ENCODE measurements at regions of chr14 and their contacts with region 1.

Region 1: DNA sequence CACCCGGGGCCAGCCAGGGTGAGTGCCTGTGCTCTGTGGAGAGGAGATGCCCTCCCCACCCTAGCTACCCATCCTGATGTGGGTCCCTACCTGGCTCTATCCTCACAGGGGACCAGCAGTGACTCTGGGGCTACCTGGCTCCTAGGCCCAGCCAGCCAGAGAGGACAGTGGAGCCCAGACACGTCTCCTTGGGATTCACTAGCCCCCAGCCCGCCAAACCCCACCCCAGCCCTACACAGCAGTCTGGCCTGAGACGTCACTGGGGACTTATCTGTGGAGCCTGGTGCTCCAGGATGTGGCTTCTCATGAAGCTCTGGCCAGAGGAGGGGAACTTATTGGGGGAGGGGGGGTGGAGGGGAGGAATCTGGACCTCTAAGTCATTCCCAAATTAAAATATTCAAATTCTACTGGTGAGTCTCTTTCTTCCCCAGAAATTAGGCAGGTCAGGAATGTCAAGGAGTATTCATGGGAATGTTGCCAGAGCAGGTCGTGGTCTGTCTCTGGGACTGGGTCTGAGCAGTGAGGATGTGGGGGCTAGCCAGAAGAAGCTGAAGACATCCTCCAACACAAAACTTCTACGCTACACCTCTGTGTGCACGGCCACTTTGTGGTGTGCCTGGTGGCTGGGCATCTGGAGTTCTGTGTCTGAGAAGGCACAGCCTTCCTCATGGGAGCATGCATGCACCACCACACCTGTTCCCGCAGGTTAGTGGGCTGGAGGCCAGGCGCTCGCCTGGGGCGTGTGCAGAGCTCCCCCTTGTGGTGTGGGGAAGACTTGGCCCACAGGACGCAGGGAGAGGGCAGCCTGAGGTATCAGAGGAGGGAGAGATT is 2.7 kb downstream of the CMTM5 start:
- DNase-seq: peak; percentile 53 to 84 (median 67)
- ATAC-seq: peak; percentile 96
- H3K4me3 ChIP-seq: no peak overlapping the region
- H3K4me3 Mint-ChIP-seq: no peak overlapping the region
- H3K27ac ChIP-seq: no peak overlapping the region
- H3K27ac Mint-ChIP-seq: no peak overlapping the region
- H3K4me1 ChIP-seq: no peaks in the 10 kb centered on the region
- H3K4me1 Mint-ChIP-seq: no peaks in the 10 kb centered on the region
- H3K27me3 ChIP-seq: no peaks in the 10 kb centered on the region
- H3K27me3 Mint-ChIP-seq: peaks cover 24% of the 10 kb centered on the region
- CTCF ChIP-seq: peak; percentile 89

Region 2: GRCh38 chr14:23061995-23062394 is 317.6 kb before region 1 on chr14:
- CTCF ChIA-PET with region 1: no interaction called
- POLR2A ChIA-PET with region 1: no interaction called
- intact Hi-C with region 1: no loop called
- DNase-seq: no peak
- ATAC-seq: no peak
- H3K4me3 ChIP-seq: no peak overlapping the region
- H3K4me3 Mint-ChIP-seq: no peak overlapping the region
- H3K27ac ChIP-seq: no peak overlapping the region
- H3K27ac Mint-ChIP-seq: no peak overlapping the region
- H3K4me1 ChIP-seq: peaks cover 10% of the 10 kb centered on the region
- H3K4me1 Mint-ChIP-seq: peaks cover 11% of the 10 kb centered on the region
- H3K27me3 ChIP-seq: no peaks in the 10 kb centered on the region
- H3K27me3 Mint-ChIP-seq: no peaks in the 10 kb centered on the region
- CTCF ChIP-seq: no peak

Region 3: DNA sequence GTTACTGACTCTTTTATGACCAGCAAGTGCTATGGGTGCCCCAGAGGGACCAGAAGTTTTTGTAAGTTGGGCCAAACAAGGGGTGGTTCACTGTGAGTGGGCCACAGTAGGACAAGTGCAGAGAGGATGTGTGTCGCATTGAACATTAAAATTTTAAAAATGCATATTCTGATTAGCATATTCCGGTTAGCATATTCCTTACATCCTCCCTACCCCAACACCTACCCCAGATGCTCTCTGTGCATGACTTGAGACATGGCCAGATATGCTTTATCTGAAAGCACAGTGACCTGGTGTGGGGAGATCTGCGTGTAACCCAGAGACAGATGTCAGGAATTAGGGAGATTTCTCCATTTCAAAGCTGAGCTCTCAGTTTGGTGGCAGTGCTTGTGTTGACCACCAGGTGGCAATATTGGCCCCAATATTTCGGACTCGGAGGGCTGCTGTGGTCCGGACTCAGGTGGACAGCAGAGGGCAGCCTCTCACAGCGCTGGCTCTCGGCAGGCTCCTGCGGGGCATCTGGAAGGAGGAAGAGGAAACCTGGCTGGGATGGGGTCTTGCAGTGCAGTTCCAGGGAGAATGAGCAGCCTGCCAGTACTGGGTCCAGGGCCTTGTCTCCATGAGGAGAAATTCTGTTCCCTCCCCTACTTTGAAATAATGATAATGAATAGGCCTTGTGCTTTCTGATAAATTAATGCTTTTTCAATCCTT is 258.9 kb before region 1 on chr14:
- CTCF ChIA-PET with region 1: interaction called, 8 read pairs
- POLR2A ChIA-PET with region 1: no interaction called
- intact Hi-C with region 1: loop called in 1 of 2 experiments (anchors 2 kb)
- DNase-seq: peak; percentile 63 to 91 (median 72)
- ATAC-seq: peak; percentile 61
- H3K4me3 ChIP-seq: no peak overlapping the region
- H3K4me3 Mint-ChIP-seq: peak overlapping the region; percentile 80
- H3K27ac ChIP-seq: peak overlapping the region; percentile 51 to 55
- H3K27ac Mint-ChIP-seq: peak overlapping the region; percentile 94
- H3K4me1 ChIP-seq: peaks cover 54% of the 10 kb centered on the region
- H3K4me1 Mint-ChIP-seq: peaks cover 61% of the 10 kb centered on the region
- H3K27me3 ChIP-seq: no peaks in the 10 kb centered on the region
- H3K27me3 Mint-ChIP-seq: no peaks in the 10 kb centered on the region
- CTCF ChIP-seq: peak; percentile 99

Region 4: GRCh38 chr14:23269193-23269592 is 110.4 kb before region 1 on chr14:
- CTCF ChIA-PET with region 1: interaction called, 9 read pairs
- POLR2A ChIA-PET with region 1: interaction called, 3 read pairs
- intact Hi-C with region 1: loop called (anchors 1 kb)
- DNase-seq: no peak
- ATAC-seq: no peak
- H3K4me3 ChIP-seq: no peak overlapping the region
- H3K4me3 Mint-ChIP-seq: no peak overlapping the region
- H3K27ac ChIP-seq: no peak overlapping the region
- H3K27ac Mint-ChIP-seq: no peak overlapping the region
- H3K4me1 ChIP-seq: no peaks in the 10 kb centered on the region
- H3K4me1 Mint-ChIP-seq: no peaks in the 10 kb centered on the region
- H3K27me3 ChIP-seq: peaks cover 0 to 4% of the 10 kb centered on the region in 2 experiments
- H3K27me3 Mint-ChIP-seq: peaks cover 17% of the 10 kb centered on the region
- CTCF ChIP-seq: no peak

Region 5: GRCh38 chr14:23327947-23328744 is 51.4 kb before region 1 on chr14:
- CTCF ChIA-PET with region 1: interaction called, 4 read pairs
- POLR2A ChIA-PET with region 1: no interaction called
- intact Hi-C with region 1: loop called (anchors 1 kb)
- DNase-seq: peak; percentile 32 to 84 (median 54)
- ATAC-seq: peak; percentile 78
- H3K4me3 ChIP-seq: no peak overlapping the region
- H3K4me3 Mint-ChIP-seq: peak overlapping the region; percentile 36
- H3K27ac ChIP-seq: no peak overlapping the region
- H3K27ac Mint-ChIP-seq: no peak overlapping the region
- H3K4me1 ChIP-seq: peaks cover 9% of the 10 kb centered on the region
- H3K4me1 Mint-ChIP-seq: peaks cover 8% of the 10 kb centered on the region
- H3K27me3 ChIP-seq: no peaks in the 10 kb centered on the region
- H3K27me3 Mint-ChIP-seq: no peaks in the 10 kb centered on the region
- CTCF ChIP-seq: peak; percentile 96

Region 6: DNA sequence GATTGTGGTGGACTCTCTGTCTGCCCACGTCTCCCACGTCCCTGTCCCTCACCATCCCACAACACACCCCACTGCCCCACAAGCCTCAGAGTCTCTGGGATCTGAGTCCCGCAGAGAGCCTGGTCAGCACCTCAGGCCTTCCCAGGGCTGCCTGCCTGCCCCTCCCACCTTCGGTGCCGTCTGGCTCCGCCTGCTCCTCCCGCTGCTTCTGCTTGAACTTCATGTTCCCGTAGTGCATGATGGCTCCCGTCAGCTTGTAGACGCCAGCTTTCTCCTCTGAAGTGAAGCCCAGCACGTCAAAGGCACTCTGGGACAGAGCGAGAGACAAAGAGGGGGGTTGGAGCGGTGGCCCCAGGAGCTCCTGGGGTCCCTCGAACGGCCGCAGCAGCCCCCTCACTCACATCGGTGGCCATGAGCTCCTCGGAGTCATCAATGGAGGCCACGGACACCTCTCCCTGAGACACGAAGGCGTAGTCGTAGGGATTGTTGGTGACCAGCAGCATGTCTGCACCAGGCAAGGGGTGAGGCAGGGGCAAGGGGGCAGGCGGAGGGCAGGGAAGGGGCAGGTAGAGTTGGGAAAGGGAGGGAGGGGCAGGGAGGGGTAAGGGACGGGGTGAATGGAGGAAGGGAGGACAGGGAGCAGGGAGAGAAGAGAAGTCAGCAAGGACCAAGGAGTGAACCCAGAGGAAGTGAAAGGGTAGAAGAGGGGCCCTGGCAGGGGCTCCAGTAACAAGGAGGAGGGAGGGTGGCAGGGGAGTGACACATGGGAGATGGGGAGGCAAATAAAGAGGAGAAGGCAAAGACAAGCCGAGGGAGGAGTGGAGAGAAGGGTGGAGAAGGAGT is 22.9 kb after region 1 on chr14:
- CTCF ChIA-PET with region 1: no interaction called
- POLR2A ChIA-PET with region 1: no interaction called
- intact Hi-C with region 1: no loop called
- DNase-seq: no peak
- ATAC-seq: no peak
- H3K4me3 ChIP-seq: no peak overlapping the region
- H3K4me3 Mint-ChIP-seq: no peak overlapping the region
- H3K27ac ChIP-seq: no peak overlapping the region
- H3K27ac Mint-ChIP-seq: no peak overlapping the region
- H3K4me1 ChIP-seq: no peaks in the 10 kb centered on the region
- H3K4me1 Mint-ChIP-seq: no peaks in the 10 kb centered on the region
- H3K27me3 ChIP-seq: peaks cover 0 to under 1% of the 10 kb centered on the region in 2 experiments
- H3K27me3 Mint-ChIP-seq: peaks cover 23% of the 10 kb centered on the region
- CTCF ChIP-seq: no peak

Measured in CD4-positive, alpha-beta T cell (primary cell).